Activated CD4-positive, alpha-beta T cell treated with anti-CD3 and anti-CD28 coated beads, Interleukin-2, amount 10 ng/mL, durations not matched to agents 7 days and 5 days (primary cell): ENCODE measurements at regions of chr20 and their contacts with region 1.

Region 1: GRCh38 chr20:59940174-59940971 is at the starts of genes FAM217B and PPP1R3D:
- DNase-seq: peak; percentile 90
- H3K4me3 Mint-ChIP-seq: peak within 1 kb of the TSS; percentile 95
- H3K27ac Mint-ChIP-seq: peak within 1 kb of the TSS; percentile 98
- H3K4me1 Mint-ChIP-seq: peaks cover 41% of the 10 kb centered on the region
- H3K27me3 Mint-ChIP-seq: no peaks in the 10 kb centered on the region
- total RNA-seq, gene FAM217B: 33.7 to 40.6 TPM
- total RNA-seq, gene PPP1R3D: 7.0 to 7.5 TPM

Region 2: DNA sequence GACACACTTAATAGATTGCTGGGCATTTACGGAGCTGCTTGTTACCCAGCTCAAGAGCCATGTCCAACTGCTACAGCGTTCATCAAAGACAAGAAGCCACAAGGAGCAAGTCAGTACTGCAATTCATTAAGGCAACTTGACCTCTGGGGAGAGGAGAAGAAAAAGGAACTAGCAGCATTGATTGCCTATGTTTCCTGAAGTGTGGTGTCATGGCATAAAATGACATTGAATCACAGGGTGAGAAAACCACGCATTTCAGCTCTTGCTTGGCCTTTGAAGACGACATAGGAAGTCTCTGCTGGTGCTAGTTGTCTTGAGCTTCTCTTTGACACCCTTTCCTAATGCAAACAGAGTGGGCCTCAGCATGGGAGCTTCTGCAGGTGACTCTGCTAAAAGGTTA is 156.9 kb after region 1 on chr20:
- CTCF ChIA-PET with region 1: no interaction called
- POLR2A ChIA-PET with region 1: interaction called, 11 read pairs
- DNase-seq: no peak
- H3K4me3 Mint-ChIP-seq: no peak overlapping the region
- H3K27ac Mint-ChIP-seq: no peak overlapping the region
- H3K4me1 Mint-ChIP-seq: peaks cover 19% of the 10 kb centered on the region
- H3K27me3 Mint-ChIP-seq: peaks cover 5% of the 10 kb centered on the region